Activated T-helper 2 cell treated with anti-CD3 and anti-CD28 coated beads, Interferon-gamma antibody, Interleukin-2, Interleukin-4, amounts not matched to agents 10 μg/mL and 5 μg/mL and 100 μg/mL, durations not matched to agents 14 hours and 24 hours and 36 hours (primary cell): ENCODE measurements at regions of chr3 and their contacts with region 1.

Region 1: GRCh38 chr3:187319699-187320302 is 28.3 kb upstream of the MASP1 start:
- DNase-seq: peak; percentile 48
- H3K4me3 Mint-ChIP-seq: no peak overlapping the region
- H3K27ac Mint-ChIP-seq: no peak overlapping the region
- H3K4me1 Mint-ChIP-seq: peaks cover 11% of the 10 kb centered on the region
- H3K27me3 Mint-ChIP-seq: peaks cover 31% of the 10 kb centered on the region

Region 2: GRCh38 chr3:186901135-186901734 is 418.6 kb before region 1 on chr3:
- intact Hi-C with region 1: no loop called
- DNase-seq: no peak
- H3K4me3 Mint-ChIP-seq: no peak overlapping the region
- H3K27ac Mint-ChIP-seq: no peak overlapping the region
- H3K4me1 Mint-ChIP-seq: peaks cover 24% of the 10 kb centered on the region
- H3K27me3 Mint-ChIP-seq: no peaks in the 10 kb centered on the region

Region 3: DNA sequence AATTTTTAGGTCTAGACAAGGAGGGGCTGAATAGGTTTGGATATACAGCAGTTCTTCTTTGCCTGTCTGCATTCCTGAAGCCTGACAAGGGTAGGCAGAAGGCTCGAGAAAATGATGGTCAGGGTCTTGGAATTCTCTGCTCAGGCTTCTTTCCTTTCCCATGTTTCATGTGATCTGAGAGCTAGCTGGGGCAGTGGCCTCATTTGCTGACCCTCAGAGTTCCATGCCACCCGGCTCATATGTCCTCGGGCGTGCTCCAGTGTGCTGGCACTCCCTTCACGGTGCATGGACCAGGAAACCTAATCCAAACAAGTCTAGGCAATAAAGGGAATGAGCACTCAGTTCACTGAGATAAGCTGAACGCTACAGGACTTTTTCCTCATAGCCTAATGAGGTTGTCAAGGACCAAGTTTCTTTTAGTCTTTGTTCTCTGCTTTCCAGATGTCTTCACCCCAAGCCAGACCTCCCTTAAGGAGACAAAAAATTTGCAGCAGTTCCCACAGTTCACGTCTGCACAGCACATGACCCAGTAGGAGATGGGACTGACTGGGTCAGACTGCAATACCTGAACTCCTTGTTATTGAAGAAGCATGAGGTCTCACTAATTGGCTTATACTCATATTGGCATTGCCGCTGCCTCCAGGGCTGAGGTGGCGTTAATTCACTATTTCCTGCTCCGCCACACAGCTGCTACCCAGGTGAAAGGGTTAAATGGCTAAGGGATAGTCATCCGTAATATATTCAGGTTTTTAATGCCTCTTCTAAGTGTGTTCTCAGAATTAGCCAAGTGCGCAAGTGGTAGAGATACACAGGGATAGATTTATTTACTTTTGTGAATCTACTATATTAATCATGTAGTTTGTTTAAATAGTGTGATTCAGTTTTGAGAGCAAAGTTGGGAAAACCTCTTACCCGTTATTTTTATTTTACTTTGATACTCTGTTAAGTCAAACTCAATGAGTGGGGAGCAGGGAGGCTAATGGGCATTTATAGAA is 33.1 kb after region 1 on chr3:
- intact Hi-C with region 1: no loop called
- DNase-seq: no peak
- H3K4me3 Mint-ChIP-seq: no peak overlapping the region
- H3K27ac Mint-ChIP-seq: no peak overlapping the region
- H3K4me1 Mint-ChIP-seq: no peaks in the 10 kb centered on the region
- H3K27me3 Mint-ChIP-seq: peaks cover 21% of the 10 kb centered on the region

Region 4: GRCh38 chr3:187430576-187430975 is 110.8 kb after region 1 on chr3:
- intact Hi-C with region 1: loop called (anchors 5 kb)
- DNase-seq: no peak
- H3K4me3 Mint-ChIP-seq: no peak overlapping the region
- H3K27ac Mint-ChIP-seq: no peak overlapping the region
- H3K4me1 Mint-ChIP-seq: no peaks in the 10 kb centered on the region
- H3K27me3 Mint-ChIP-seq: peaks cover 13% of the 10 kb centered on the region

Region 5: GRCh38 chr3:187616307-187616972 is 296.6 kb after region 1 on chr3:
- intact Hi-C with region 1: loop called (anchors 1 kb)
- DNase-seq: peak; percentile 28
- H3K4me3 Mint-ChIP-seq: no peak overlapping the region
- H3K27ac Mint-ChIP-seq: no peak overlapping the region
- H3K4me1 Mint-ChIP-seq: no peaks in the 10 kb centered on the region
- H3K27me3 Mint-ChIP-seq: peaks cover 30% of the 10 kb centered on the region

Region 6: DNA sequence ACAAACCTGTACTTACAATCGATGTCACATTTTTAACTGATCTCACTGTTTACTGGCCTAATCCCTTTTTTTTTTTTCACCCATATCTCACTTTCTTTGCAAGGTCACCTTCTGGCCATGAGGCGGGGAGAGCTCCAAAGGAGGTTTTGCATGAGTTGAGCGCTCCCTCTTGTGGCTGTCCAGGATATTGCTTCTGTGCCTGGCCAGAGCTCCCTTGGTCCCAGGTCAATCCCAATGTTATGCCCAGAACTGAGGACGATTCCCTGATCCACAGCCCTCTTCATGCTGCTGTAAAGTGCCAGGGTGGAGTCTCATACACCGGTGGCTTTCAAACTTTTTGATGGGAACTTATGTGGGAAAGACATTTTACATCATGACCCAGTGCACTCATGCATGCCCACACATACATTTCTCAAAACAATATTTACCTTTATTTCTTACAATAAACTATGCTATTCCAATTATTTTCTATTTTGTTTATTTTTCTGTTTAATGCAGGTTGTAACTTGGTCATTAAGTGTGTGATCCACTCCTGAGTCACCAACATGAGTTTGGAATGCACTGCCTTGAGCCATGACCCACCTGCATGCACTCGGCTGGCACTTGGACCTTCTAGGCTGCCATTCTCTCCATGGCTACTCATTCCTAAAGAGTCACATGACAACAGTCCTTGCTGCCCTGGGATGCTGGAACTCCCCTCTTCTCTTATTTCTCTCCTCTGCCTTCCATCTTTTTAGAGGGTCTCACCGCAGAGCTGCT is 360.0 kb after region 1 on chr3:
- intact Hi-C with region 1: loop called (anchors 1 kb)
- DNase-seq: peak; percentile 34
- H3K4me3 Mint-ChIP-seq: no peak overlapping the region
- H3K27ac Mint-ChIP-seq: no peak overlapping the region
- H3K4me1 Mint-ChIP-seq: peaks cover 5% of the 10 kb centered on the region
- H3K27me3 Mint-ChIP-seq: peaks cover 44% of the 10 kb centered on the region

Region 7: GRCh38 chr3:187714404-187714979 is 394.7 kb after region 1 on chr3:
- intact Hi-C with region 1: loop called (anchors 1 kb)
- DNase-seq: peak; percentile 61
- H3K4me3 Mint-ChIP-seq: no peak overlapping the region
- H3K27ac Mint-ChIP-seq: no peak overlapping the region
- H3K4me1 Mint-ChIP-seq: peaks cover 8% of the 10 kb centered on the region
- H3K27me3 Mint-ChIP-seq: peaks cover 9% of the 10 kb centered on the region